ENCODE measurements at regions of chr10 and their contacts with region 1.

Region 1: DNA sequence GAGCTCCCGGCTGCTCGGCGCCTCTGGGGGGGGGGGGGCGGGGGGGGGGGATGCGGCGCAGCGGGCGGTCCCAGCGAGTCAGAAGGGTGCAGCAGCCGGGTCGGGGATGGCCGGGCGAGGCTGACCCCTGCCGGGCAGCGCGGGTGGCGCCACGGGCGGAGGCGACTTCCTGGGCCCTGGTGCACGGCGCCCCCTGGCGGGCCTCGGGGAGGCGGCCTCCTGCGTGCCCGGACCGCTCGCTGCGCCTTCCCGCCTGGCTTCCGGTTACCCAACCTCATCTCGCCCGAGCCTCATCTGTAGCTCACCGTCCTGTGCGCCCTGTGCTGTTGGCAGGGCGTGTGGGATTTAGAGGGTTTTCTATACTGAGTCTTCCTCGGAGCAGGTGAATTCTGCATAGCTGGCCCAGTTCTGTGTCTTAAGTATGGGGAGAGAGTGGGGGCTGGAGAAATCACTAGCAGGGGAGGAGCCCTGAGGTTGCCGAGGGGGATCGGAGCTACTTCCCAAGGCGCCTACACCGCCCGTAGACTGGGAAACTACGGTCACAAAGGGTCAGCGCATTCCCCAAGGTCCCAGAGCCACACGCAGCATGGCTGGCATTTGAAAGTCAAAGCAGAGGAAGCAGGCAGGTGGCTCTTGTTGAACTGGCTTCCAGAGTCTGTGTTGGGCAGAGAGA is 28.3 kb upstream of the WDFY4 start:
- DNase-seq: peak; percentile 96
- ATAC-seq: peak; percentile 94
- H3K4me3 ChIP-seq: peak overlapping the region; percentile 33 to 59 (median 53)
- H3K4me3 Mint-ChIP-seq: peak overlapping the region; percentile 86
- H3K27ac ChIP-seq: no peak overlapping the region
- H3K27ac Mint-ChIP-seq: peak overlapping the region; percentile 72
- H3K4me1 ChIP-seq: peaks cover 45 to 47% of the 10 kb centered on the region in 2 donors
- H3K4me1 Mint-ChIP-seq: peaks cover 52% of the 10 kb centered on the region
- H3K27me3 ChIP-seq: peaks cover 0 to 16% (median 8%) of the 10 kb centered on the region in 4 experiments
- H3K27me3 Mint-ChIP-seq: peaks cover 4% of the 10 kb centered on the region
- CTCF ChIP-seq: peak; percentile 99

Region 2: GRCh38 chr10:48306265-48306869 is 350.0 kb before region 1 on chr10 and contains the start of gene MAPK8:
- CTCF ChIA-PET with region 1: interaction called, 5 read pairs
- POLR2A ChIA-PET with region 1: no interaction called
- intact Hi-C with region 1: loop called (anchors 5 kb)
- DNase-seq: peak; percentile 97
- ATAC-seq: peak; percentile 90
- H3K4me3 ChIP-seq: peak within 1 kb of the TSS; percentile 48 to 79 (median 71)
- H3K4me3 Mint-ChIP-seq: peak within 1 kb of the TSS; percentile 84
- H3K27ac ChIP-seq: peak within 1 kb of the TSS; percentile 54 to 89
- H3K27ac Mint-ChIP-seq: peak within 1 kb of the TSS; percentile 84
- H3K4me1 ChIP-seq: peaks cover 6 to 23% of the 10 kb centered on the region in 2 donors
- H3K4me1 Mint-ChIP-seq: peaks cover 27% of the 10 kb centered on the region
- H3K27me3 ChIP-seq: no peaks in the 10 kb centered on the region
- H3K27me3 Mint-ChIP-seq: no peaks in the 10 kb centered on the region
- CTCF ChIP-seq: no peak
- total RNA-seq, gene MAPK8: 40.0 and 51.5 TPM in 2 replicates

Region 3: DNA sequence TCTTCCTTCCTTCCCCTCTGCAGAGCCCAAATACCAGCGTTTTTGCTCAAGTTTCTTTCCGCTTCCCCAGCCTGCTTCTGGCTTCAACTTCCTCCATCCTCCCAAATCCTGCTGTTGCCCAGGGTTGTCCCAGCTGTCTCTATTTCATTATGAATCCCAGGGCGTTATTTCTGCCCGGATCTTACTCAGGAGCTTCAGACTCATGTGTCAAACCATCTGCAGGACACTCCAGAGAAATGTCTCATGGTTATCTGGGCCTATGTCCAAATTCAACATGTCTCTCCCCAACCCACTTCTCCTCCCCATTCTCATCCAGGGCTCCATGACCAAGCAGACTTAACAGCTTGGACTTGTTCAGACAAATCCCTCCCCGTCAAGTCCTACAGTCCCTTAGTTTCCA is 67.1 kb before region 1 on chr10:
- CTCF ChIA-PET with region 1: interaction called, 407 read pairs
- POLR2A ChIA-PET with region 1: no interaction called
- intact Hi-C with region 1: no loop called
- DNase-seq: no peak
- ATAC-seq: no peak
- H3K4me3 ChIP-seq: no peak overlapping the region
- H3K4me3 Mint-ChIP-seq: no peak overlapping the region
- H3K27ac ChIP-seq: no peak overlapping the region
- H3K27ac Mint-ChIP-seq: no peak overlapping the region
- H3K4me1 ChIP-seq: peaks cover 8 to 12% of the 10 kb centered on the region in 2 donors
- H3K4me1 Mint-ChIP-seq: peaks cover 25% of the 10 kb centered on the region
- H3K27me3 ChIP-seq: no peaks in the 10 kb centered on the region
- H3K27me3 Mint-ChIP-seq: no peaks in the 10 kb centered on the region
- CTCF ChIP-seq: no peak

Region 4: GRCh38 chr10:48670978-48671913 is 14.9 kb after region 1 on chr10:
- CTCF ChIA-PET with region 1: interaction called, 139 read pairs
- POLR2A ChIA-PET with region 1: interaction called, 18 read pairs
- intact Hi-C with region 1: loop called (anchors 1 kb)
- DNase-seq: peak; percentile 95
- ATAC-seq: peak; percentile 70
- H3K4me3 ChIP-seq: peak overlapping the region in 4 of 5 experiments; percentile 13 to 61 (median 38)
- H3K4me3 Mint-ChIP-seq: peak overlapping the region; percentile 91
- H3K27ac ChIP-seq: peak overlapping the region; percentile 99 to 100
- H3K27ac Mint-ChIP-seq: peak overlapping the region; percentile 97
- H3K4me1 ChIP-seq: peaks cover 70 to 75% of the 10 kb centered on the region in 2 donors
- H3K4me1 Mint-ChIP-seq: peaks cover 66% of the 10 kb centered on the region
- H3K27me3 ChIP-seq: no peaks in the 10 kb centered on the region
- H3K27me3 Mint-ChIP-seq: no peaks in the 10 kb centered on the region
- CTCF ChIP-seq: no peak

Region 5: DNA sequence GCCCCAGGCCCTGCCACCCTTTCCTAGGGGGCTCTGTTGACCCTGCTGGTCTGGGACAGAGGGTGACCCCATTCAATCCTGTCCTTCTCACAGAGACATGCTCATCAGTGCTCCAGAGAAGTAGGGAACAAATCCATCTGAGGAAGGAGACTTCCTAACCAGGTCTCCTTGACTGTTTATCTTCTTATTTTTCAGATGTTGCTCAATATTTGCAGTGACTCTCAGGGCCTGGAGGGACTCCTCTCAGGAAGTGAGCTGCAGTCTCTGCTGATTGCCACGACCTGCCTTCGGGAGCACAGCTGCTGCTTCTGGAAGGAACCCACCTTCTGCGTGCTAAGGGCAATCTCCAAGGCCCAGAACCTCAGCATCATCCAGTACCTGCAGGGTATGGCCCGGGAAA is 69.3 kb after region 1 on chr10:
- CTCF ChIA-PET with region 1: interaction called, 42 read pairs
- POLR2A ChIA-PET with region 1: no interaction called
- intact Hi-C with region 1: no loop called
- DNase-seq: no peak
- ATAC-seq: no peak
- H3K4me3 ChIP-seq: no peak overlapping the region
- H3K4me3 Mint-ChIP-seq: no peak overlapping the region
- H3K27ac ChIP-seq: no peak overlapping the region
- H3K27ac Mint-ChIP-seq: no peak overlapping the region
- H3K4me1 ChIP-seq: no peaks in the 10 kb centered on the region
- H3K4me1 Mint-ChIP-seq: peaks cover 5% of the 10 kb centered on the region
- H3K27me3 ChIP-seq: no peaks in the 10 kb centered on the region
- H3K27me3 Mint-ChIP-seq: no peaks in the 10 kb centered on the region
- CTCF ChIP-seq: no peak

Region 6: DNA sequence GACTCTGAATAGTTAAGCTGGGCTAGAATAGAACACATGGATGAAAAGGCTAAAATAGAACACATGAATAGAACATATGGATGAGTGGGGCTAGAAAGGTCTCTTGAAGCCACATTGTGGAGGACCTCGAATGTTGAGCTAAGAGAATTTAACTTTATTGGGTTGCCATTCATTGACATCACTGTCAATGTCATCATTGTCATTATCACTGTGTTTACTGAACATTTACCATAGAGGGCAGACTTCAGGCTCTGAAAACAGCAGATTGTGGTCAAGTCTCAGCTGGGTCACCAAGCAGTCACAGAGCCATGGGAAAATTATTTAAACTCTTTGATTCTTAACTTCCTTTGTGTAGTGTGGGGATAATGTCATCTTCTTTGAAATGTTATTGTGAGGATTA is 108.7 kb after region 1 on chr10:
- CTCF ChIA-PET with region 1: interaction called, 47 read pairs
- POLR2A ChIA-PET with region 1: no interaction called
- intact Hi-C with region 1: no loop called
- DNase-seq: no peak
- ATAC-seq: no peak
- H3K4me3 ChIP-seq: no peak overlapping the region
- H3K4me3 Mint-ChIP-seq: no peak overlapping the region
- H3K27ac ChIP-seq: no peak overlapping the region
- H3K27ac Mint-ChIP-seq: peak overlapping the region; percentile 26
- H3K4me1 ChIP-seq: no peaks in the 10 kb centered on the region
- H3K4me1 Mint-ChIP-seq: peaks cover 12% of the 10 kb centered on the region
- H3K27me3 ChIP-seq: no peaks in the 10 kb centered on the region
- H3K27me3 Mint-ChIP-seq: no peaks in the 10 kb centered on the region
- CTCF ChIP-seq: no peak

Region 7: DNA sequence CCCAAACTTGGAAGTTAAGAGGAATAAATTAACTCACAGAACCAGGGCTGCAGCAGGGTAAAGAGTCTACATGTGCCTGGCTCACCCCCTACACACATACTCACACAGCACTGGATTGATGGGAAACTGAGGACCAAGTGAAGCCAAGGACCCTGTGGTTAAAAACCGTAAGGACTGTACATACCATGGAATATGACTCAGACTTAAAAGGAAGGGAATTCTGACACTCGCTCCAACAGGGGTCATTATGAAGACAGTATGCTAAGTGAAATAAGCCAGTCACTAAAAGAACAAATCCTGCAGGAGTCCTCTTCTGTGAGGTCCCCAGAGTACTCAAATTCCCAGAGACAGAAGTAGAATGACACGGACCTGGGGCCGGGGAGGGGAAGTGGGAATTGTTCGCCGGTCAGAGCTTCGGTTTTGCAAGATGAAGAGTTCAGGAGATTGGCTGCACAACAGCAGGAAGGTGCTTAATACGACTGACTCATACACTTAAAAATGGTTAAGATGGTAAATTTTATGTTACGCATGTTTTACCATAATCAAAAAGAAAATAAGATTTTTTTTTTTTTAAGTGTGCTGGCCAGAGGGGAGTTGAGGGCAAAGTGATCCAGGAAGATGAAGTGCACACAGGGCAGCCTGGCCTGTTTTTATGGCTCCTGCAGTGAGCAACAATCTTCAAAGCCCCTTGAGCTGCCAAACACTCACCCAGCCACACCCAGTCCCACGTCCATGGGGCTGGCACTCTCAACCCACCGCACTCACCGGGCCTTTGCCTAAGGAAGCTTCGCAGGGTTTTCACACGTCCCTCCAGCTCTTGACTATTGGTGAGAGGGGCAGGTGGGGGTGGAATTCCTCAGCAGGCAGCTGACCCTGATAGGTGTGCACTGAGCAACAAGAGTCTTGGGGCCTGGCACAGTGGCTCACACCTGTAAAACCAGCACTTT is 713.1 kb after region 1 on chr10:
- CTCF ChIA-PET with region 1: no interaction called
- POLR2A ChIA-PET with region 1: no interaction called
- intact Hi-C with region 1: no loop called
- DNase-seq: no peak
- ATAC-seq: no peak
- H3K4me3 ChIP-seq: no peak overlapping the region
- H3K4me3 Mint-ChIP-seq: no peak overlapping the region
- H3K27ac ChIP-seq: no peak overlapping the region
- H3K27ac Mint-ChIP-seq: no peak overlapping the region
- H3K4me1 ChIP-seq: no peaks in the 10 kb centered on the region
- H3K4me1 Mint-ChIP-seq: no peaks in the 10 kb centered on the region
- H3K27me3 ChIP-seq: no peaks in the 10 kb centered on the region
- H3K27me3 Mint-ChIP-seq: peaks cover 10% of the 10 kb centered on the region
- CTCF ChIP-seq: no peak

Region 8: GRCh38 chr10:49538381-49539319 is 882.3 kb after region 1 on chr10 and contains the start of gene ERCC6:
- CTCF ChIA-PET with region 1: no interaction called
- POLR2A ChIA-PET with region 1: no interaction called
- intact Hi-C with region 1: loop called (anchors 5 kb)
- DNase-seq: peak; percentile 97
- ATAC-seq: peak; percentile 87
- H3K4me3 ChIP-seq: peak within 1 kb of the TSS; percentile 75 to 93 (median 83)
- H3K4me3 Mint-ChIP-seq: peak within 1 kb of the TSS; percentile 86
- H3K27ac ChIP-seq: peak within 1 kb of the TSS; percentile 84 to 89
- H3K27ac Mint-ChIP-seq: peak within 1 kb of the TSS; percentile 95
- H3K4me1 ChIP-seq: peaks cover 19 to 35% of the 10 kb centered on the region in 2 donors
- H3K4me1 Mint-ChIP-seq: peaks cover 53% of the 10 kb centered on the region
- H3K27me3 ChIP-seq: peaks cover 0 to 11% (median 2%) of the 10 kb centered on the region in 4 experiments
- H3K27me3 Mint-ChIP-seq: peaks cover 13% of the 10 kb centered on the region
- CTCF ChIP-seq: no peak
- total RNA-seq, gene ERCC6: 59.8 and 65.9 TPM in 2 replicates

Measured in B cell (primary cell).